Adrenal gland (tissue), 19 donors: ENCODE measurements at regions of chr2 and their contacts with region 1.

Region 1: GRCh38 chr2:177604271-177605065 is 211.9 kb downstream of the AGPS start:
- DNase-seq: peak in 3 of 7 donors; percentile 12 to 19 (median 16)
- H3K4me3 ChIP-seq: no peak overlapping the region
- H3K27ac ChIP-seq: peak overlapping the region in 2 of 5 donors; percentile 23 to 36
- H3K4me1 ChIP-seq: peaks cover 0 to 10% of the 10 kb centered on the region in 2 donors
- H3K27me3 ChIP-seq: no peaks in the 10 kb centered on the region
- CTCF ChIP-seq: peak; percentile 47 to 65 (median 59)
- POLR2A ChIP-seq: no peak

Region 2: GRCh38 chr2:177489719-177490301 is 114.7 kb before region 1 on chr2:
- intact Hi-C with region 1: loop called in 1 of 2 experiments (anchors 10 kb)
- DNase-seq: no peak
- H3K4me3 ChIP-seq: no peak overlapping the region
- H3K27ac ChIP-seq: no peak overlapping the region
- H3K4me1 ChIP-seq: no peaks in the 10 kb centered on the region
- H3K27me3 ChIP-seq: no peaks in the 10 kb centered on the region
- CTCF ChIP-seq: peak; percentile 36 to 62 (median 50)
- POLR2A ChIP-seq: no peak

Region 3: GRCh38 chr2:177724398-177725287 is 120.2 kb after region 1 on chr2:
- intact Hi-C with region 1: loop called in 1 of 2 experiments (anchors 10 kb)
- DNase-seq: peak; percentile 39 to 75 (median 54)
- H3K4me3 ChIP-seq: no peak overlapping the region
- H3K27ac ChIP-seq: no peak overlapping the region
- H3K4me1 ChIP-seq: peaks cover 4 to 9% of the 10 kb centered on the region in 2 donors
- H3K27me3 ChIP-seq: no peaks in the 10 kb centered on the region
- CTCF ChIP-seq: peak; percentile 79 to 86 (median 82)
- POLR2A ChIP-seq: no peak